Heart left ventricle (tissue), 16 donors: ENCODE measurements at regions of chr2 and their contacts with region 1.

Region 1: GRCh38 chr2:120735746-120736170 is at the start of gene GLI2:
- DNase-seq: peak; percentile 63 to 85 (median 74)
- ATAC-seq: peak; percentile 43 to 87 (median 78)
- H3K4me3 ChIP-seq: peak within 1 kb of the TSS; percentile 24 to 71 (median 52)
- H3K27ac ChIP-seq: peak within 1 kb of the TSS in 10 of 12 donors; percentile 65 to 87 (median 72)
- H3K4me1 ChIP-seq: peaks cover 0 to 31% (median 5%) of the 10 kb centered on the region in 12 donors
- H3K27me3 ChIP-seq: peaks cover 11 to 76% (median 37%) of the 10 kb centered on the region in 9 donors
- CTCF ChIP-seq: peak; percentile 39 to 92 (median 70)
- POLR2A ChIP-seq: no peak
- total RNA-seq, gene GLI2: 0.67 to 4.1 (median 1.0) TPM

Region 2: DNA sequence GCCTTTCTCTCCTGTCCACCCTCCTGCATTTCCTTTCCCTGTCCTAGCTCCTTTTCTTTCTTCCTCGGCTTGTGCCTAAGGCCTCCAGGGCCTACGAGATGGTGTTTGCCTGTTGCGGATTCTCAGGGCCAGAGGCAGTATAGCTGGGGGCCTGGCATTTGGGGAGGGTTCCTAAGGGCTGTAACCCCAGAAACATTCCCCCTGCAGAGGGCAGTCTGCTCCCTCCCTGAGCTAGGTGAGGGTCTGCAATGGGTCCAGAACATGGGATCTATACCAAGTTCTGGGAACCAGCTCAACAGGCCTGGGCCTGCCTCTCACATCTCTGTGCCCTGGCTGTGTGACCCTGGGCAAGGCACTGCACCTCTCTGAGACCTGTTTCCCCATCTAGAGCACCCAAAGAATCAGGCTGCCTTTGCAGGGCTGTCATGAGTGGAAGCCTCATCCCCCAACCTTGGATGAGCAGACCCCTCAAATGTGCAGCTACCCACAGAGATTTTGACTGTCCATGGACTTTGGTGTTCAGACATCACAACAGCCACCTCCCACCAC is 97.4 kb after region 1 on chr2:
- intact Hi-C with region 1: no loop called
- DNase-seq: peak in 2 of 5 donors; percentile 7 to 33
- ATAC-seq: no peak
- H3K4me3 ChIP-seq: no peak overlapping the region
- H3K27ac ChIP-seq: no peak overlapping the region
- H3K4me1 ChIP-seq: peaks cover 0 to 9% (median 0%) of the 10 kb centered on the region in 12 donors
- H3K27me3 ChIP-seq: no peaks in the 10 kb centered on the region
- CTCF ChIP-seq: no peak
- POLR2A ChIP-seq: no peak

Region 3: DNA sequence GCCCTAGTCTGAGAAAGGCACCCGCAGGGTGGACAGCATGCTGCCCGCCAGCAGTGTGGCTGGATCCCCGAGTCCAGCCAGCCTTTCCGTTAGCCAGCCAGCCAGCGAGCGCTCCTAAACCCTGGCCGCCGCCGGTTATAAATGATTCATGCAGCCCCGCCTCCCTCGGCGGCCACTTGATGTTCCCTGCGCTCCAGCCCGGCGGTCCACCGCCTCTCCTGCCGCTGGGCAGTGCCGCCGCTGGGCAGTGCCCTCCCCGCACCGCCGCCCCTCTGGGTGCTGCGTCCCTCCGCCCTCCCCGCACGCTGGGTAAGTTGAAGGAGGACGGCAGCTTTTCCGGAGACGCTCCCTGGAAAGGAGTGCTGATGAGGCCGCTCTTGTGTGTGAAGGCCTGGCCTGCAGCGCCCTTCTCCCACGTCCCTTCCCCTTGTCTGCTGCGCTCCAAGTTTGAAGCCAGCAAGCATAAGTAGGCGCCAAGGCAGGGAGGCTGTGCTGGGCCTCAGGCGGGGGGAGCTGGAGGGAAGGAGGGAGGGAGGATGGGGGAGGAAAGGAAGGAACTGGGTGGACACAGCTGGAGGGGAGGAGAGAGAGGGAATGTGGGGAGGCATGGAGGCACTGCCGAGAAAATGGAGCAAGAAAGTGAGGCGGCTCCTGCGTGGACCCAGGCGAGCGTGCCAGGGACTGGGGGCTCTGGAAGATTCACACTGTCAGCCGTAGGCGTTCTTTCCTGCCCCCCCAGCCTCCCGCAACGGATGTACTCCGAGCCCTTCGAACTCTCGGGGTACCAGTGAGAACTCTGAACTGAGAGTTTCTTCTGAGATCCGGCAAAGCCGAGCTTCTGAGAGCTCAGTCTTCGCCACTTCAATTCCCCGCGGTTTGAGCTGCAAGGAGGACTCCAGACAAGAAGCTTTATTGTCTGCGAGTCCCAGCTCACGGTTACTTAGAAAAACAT is 131.8 kb after region 1 on chr2:
- intact Hi-C with region 1: loop called in 2 of 10 experiments (anchors 5 to 10 kb)
- DNase-seq: peak; percentile 72 to 86 (median 84)
- ATAC-seq: peak; percentile 56 to 90 (median 83)
- H3K4me3 ChIP-seq: peak overlapping the region; percentile 0 to 54 (median 44)
- H3K27ac ChIP-seq: peak overlapping the region; percentile 6 to 87 (median 74)
- H3K4me1 ChIP-seq: peaks cover 0 to 30% (median 6%) of the 10 kb centered on the region in 12 donors
- H3K27me3 ChIP-seq: peaks cover 0 to 9% (median 0%) of the 10 kb centered on the region in 9 donors
- CTCF ChIP-seq: no peak
- POLR2A ChIP-seq: no peak

Region 4: GRCh38 chr2:120958623-120959366 is 223.0 kb after region 1 on chr2:
- intact Hi-C with region 1: loop called in 1 of 10 experiments (anchors 10 kb)
- DNase-seq: no peak
- ATAC-seq: no peak
- H3K4me3 ChIP-seq: no peak overlapping the region
- H3K27ac ChIP-seq: no peak overlapping the region
- H3K4me1 ChIP-seq: peaks cover 0 to 20% (median 0%) of the 10 kb centered on the region in 12 donors
- H3K27me3 ChIP-seq: no peaks in the 10 kb centered on the region
- CTCF ChIP-seq: peak in 2 of 12 donors; percentile 9 to 15
- POLR2A ChIP-seq: no peak

Region 5: DNA sequence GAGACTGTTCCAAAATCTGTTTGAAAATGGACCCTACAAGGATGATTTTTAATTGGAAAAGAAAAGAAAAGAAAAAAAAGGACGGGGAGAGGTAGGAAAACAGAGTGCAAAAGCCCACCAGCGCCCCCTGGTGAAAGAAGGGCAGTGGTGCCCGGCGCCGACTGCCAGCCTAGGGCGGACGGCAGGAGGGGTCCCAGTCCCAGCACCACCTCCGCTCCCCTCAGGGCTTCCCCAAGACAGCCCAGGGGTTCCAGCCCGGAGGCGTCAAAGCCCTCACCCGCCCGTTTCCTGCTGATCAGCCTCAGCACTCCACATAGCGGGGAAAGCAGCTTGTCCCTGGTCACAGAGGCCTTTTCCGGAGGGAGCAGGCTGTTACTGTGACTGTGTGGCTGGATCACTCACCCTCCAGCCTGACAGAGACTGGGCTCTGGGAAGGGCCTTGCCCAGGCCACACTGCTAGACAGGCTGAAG is 335.3 kb after region 1 on chr2:
- intact Hi-C with region 1: loop called in 3 of 10 experiments (anchors 2 to 10 kb)
- DNase-seq: peak; percentile 54 to 81 (median 59)
- ATAC-seq: peak; percentile 18 to 79 (median 48)
- H3K4me3 ChIP-seq: no peak overlapping the region
- H3K27ac ChIP-seq: no peak overlapping the region
- H3K4me1 ChIP-seq: peaks cover 0 to 8% (median 0%) of the 10 kb centered on the region in 12 donors
- H3K27me3 ChIP-seq: peaks cover 0 to 17% (median 4%) of the 10 kb centered on the region in 9 donors
- CTCF ChIP-seq: peak; percentile 83 to 96 (median 92)
- POLR2A ChIP-seq: no peak